ENCODE measurements at regions of chr20 and their contacts with region 1.

Region 1: GRCh38 chr20:37575884-37576283 is 48.2 kb upstream of the BLCAP start:
- DNase-seq: no peak
- H3K4me3 Mint-ChIP-seq: no peak overlapping the region
- H3K27ac Mint-ChIP-seq: no peak overlapping the region
- H3K4me1 Mint-ChIP-seq: no peaks in the 10 kb centered on the region
- H3K27me3 Mint-ChIP-seq: peaks cover 20% of the 10 kb centered on the region

Region 2: GRCh38 chr20:37564388-37565133 is 11.3 kb before region 1 on chr20:
- CTCF ChIA-PET with region 1: interaction called, 11 read pairs
- POLR2A ChIA-PET with region 1: no interaction called
- intact Hi-C with region 1: no loop called
- DNase-seq: peak; percentile 58
- H3K4me3 Mint-ChIP-seq: no peak overlapping the region
- H3K27ac Mint-ChIP-seq: no peak overlapping the region
- H3K4me1 Mint-ChIP-seq: peaks cover 2% of the 10 kb centered on the region
- H3K27me3 Mint-ChIP-seq: peaks cover 38% of the 10 kb centered on the region

Region 3: GRCh38 chr20:37615340-37616109 is 39.6 kb after region 1 on chr20:
- CTCF ChIA-PET with region 1: no interaction called
- POLR2A ChIA-PET with region 1: no interaction called
- intact Hi-C with region 1: no loop called
- DNase-seq: peak; percentile 72
- H3K4me3 Mint-ChIP-seq: no peak overlapping the region
- H3K27ac Mint-ChIP-seq: no peak overlapping the region
- H3K4me1 Mint-ChIP-seq: no peaks in the 10 kb centered on the region
- H3K27me3 Mint-ChIP-seq: peaks cover 20% of the 10 kb centered on the region

Region 4: GRCh38 chr20:37640600-37641561 is 65.0 kb after region 1 on chr20:
- CTCF ChIA-PET with region 1: no interaction called
- POLR2A ChIA-PET with region 1: no interaction called
- intact Hi-C with region 1: no loop called
- DNase-seq: no peak
- H3K4me3 Mint-ChIP-seq: no peak overlapping the region
- H3K27ac Mint-ChIP-seq: no peak overlapping the region
- H3K4me1 Mint-ChIP-seq: peaks cover 3% of the 10 kb centered on the region
- H3K27me3 Mint-ChIP-seq: peaks cover 38% of the 10 kb centered on the region

Region 5: DNA sequence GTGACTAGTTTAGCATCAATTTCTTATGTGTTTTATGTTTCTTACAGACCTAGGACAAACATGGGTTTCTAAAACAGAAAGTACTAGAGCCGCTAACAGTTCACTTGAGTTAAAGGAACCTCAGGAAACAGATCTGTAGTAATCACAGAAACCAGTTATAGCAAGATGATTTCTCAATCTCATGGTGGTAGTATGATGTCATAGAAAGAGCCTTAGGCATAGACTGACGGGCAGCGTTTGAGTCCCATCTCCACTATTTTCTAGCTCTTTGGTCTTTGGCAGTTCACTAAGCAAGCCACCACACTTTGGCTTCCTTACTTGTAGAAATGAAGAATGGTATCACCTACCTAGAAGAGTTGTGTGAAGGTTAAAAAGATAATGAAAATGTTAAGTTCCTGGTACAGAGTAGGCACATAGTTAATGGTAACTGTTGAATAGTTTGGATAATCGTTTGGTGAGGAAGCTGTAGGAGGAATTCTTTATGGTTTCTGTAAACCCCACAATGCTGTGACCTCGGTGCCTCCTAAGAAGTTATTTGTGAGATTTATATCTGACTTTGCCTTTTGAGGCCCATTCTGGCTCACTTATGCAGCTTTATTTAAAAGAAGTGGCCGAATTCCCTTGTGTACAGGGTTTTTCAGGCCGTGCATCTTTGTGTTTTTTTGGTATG is 139.3 kb after region 1 on chr20:
- CTCF ChIA-PET with region 1: no interaction called
- POLR2A ChIA-PET with region 1: no interaction called
- intact Hi-C with region 1: no loop called
- DNase-seq: no peak
- H3K4me3 Mint-ChIP-seq: no peak overlapping the region
- H3K27ac Mint-ChIP-seq: no peak overlapping the region
- H3K4me1 Mint-ChIP-seq: peaks cover 16% of the 10 kb centered on the region
- H3K27me3 Mint-ChIP-seq: no peaks in the 10 kb centered on the region

Measured in activated CD4-positive, alpha-beta memory T cell treated with anti-CD3 and anti-CD28 coated beads for 36 hours (primary cell).